ENCODE measurements at regions of chr6 and their contacts with region 1.

Region 1: GRCh38 chr6:133891149-133891926 is 2.4 kb downstream of the TCF21 start:
- DNase-seq: no peak
- H3K4me3 Mint-ChIP-seq: peak overlapping the region; percentile 76
- H3K27ac Mint-ChIP-seq: peak overlapping the region; percentile 16
- H3K4me1 Mint-ChIP-seq: peaks cover 18% of the 10 kb centered on the region
- H3K27me3 Mint-ChIP-seq: peaks cover 85% of the 10 kb centered on the region

Region 2: GRCh38 chr6:133241086-133241900 is 650.0 kb before region 1 on chr6 and contains the start of gene EYA4:
- intact Hi-C with region 1: loop called (anchors 2 kb)
- DNase-seq: no peak
- H3K4me3 Mint-ChIP-seq: no peak within 1 kb of the TSS
- H3K27ac Mint-ChIP-seq: no peak within 1 kb of the TSS
- H3K4me1 Mint-ChIP-seq: no peaks in the 10 kb centered on the region
- H3K27me3 Mint-ChIP-seq: peaks cover 60% of the 10 kb centered on the region
- total RNA-seq, gene EYA4: not detected in 2 replicates

Region 3: DNA sequence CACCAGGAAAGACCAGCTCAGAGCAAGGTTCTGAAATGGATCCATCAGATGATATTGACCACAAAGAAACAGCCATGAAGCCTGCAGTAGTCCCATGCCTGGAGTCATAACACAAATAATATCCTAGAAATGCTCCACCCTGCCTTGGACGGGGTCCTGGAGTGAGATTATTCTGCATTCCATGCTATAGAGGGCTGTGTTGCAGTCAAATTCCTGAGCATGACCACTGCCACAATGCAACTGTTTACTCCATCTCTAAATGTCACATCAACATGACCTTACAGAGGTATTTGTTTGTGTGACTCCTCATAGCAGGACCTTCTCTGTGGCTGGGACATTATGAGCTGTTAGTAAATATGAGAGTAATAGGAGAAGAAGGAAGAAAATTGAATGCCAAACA is 259.9 kb before region 1 on chr6:
- intact Hi-C with region 1: no loop called
- DNase-seq: no peak
- H3K4me3 Mint-ChIP-seq: no peak overlapping the region
- H3K27ac Mint-ChIP-seq: no peak overlapping the region
- H3K4me1 Mint-ChIP-seq: no peaks in the 10 kb centered on the region
- H3K27me3 Mint-ChIP-seq: no peaks in the 10 kb centered on the region

Region 4: DNA sequence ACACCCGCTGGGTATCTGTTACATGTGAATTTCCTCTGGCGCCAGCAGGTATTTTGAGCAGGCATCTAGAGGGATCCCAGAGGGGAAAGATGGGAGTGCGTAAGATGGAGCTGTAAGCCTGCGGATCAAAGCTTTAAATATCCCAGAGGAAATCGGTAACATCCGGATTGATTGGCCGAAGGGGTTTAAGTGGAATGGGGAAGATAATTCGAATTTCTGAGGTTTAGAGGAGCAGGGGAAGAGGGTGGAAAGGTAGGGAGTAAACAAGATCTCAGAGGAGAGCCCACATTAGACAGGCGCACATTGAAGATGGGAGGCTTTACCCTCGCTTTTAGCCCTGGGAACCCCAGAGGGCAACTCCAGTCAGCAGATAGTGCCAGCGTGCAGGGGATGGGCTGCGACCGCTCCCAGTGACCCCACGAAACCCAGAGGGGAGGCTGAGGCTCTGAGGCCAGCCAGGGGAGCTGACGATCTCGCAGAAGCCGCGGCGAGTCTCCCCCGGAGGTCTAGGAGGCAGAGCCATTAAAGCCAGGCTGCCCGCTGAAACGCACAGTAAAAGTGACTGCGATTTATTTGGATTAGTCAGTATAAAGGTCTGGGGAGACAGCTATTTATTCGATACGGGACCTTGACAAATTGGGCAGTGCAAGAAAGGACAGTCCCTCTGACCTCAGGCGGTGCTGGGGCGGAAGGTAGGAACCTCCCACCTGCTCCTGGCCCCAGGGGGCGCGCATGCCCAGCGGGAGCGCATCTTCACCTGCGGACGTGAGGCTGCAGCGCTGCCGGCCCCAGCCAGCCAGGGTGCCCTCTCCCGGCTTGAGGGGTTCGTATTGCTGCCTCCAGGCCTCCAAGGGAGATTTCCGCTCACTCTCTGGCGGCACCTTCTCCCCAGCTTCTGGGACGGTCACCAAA is 36.7 kb before region 1 on chr6:
- intact Hi-C with region 1: loop called (anchors 1 kb)
- DNase-seq: no peak
- H3K4me3 Mint-ChIP-seq: no peak overlapping the region
- H3K27ac Mint-ChIP-seq: no peak overlapping the region
- H3K4me1 Mint-ChIP-seq: peaks cover 4% of the 10 kb centered on the region
- H3K27me3 Mint-ChIP-seq: peaks cover 51% of the 10 kb centered on the region

Measured in activated T-helper 1 cell treated with anti-CD3 and anti-CD28 coated beads, Interleukin-12 subunit alpha, Interleukin-12 subunit beta, Interleukin-2, Interleukin-4 antibody, amounts not matched to agents 30 ng/mL and 10 ng/mL and 1 ng/mL, durations not matched to agents 14 hours and 24 hours and 36 hours (primary cell).